ENCODE measurements at regions of chr4 and their contacts with region 1.

Region 1: DNA sequence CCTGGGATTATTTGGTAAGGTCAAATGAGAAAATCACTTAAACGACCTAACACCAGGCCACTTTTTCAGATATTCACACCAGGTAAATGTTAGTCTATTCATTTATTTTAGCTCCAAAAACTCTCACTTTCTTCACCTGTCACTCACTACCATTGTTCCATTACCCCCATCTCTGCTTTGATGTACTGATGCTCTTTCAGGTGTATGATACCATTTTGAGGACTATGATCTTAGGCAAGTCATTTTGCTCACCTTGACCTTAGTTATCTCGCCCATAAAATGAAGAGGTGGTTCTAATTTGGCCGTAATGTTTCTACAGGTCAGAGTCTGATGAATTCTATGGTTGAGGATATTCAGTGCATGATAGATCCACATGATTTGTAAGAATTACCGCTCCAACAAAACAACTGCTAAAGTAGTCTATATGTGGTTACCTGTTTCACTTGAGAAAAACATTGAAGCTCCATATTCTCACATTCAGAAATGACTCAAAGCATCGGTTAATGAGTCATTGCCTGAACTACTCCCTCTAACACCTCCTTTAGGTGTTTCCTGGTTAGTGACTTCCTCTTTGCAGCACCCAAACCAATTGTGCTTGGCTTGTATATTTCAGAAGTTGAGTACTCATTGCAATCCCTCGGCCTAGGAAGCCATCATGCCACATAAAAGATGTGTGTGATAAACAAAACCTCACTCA is 4.5 kb downstream of the DTHD1 start:
- DNase-seq: no peak
- ATAC-seq: peak; percentile 95
- H3K4me3 Mint-ChIP-seq: no peak overlapping the region
- H3K27ac Mint-ChIP-seq: peak overlapping the region; percentile 81
- H3K4me1 Mint-ChIP-seq: peaks cover 21% of the 10 kb centered on the region
- H3K27me3 Mint-ChIP-seq: no peaks in the 10 kb centered on the region
- CTCF ChIP-seq: no peak

Region 2: DNA sequence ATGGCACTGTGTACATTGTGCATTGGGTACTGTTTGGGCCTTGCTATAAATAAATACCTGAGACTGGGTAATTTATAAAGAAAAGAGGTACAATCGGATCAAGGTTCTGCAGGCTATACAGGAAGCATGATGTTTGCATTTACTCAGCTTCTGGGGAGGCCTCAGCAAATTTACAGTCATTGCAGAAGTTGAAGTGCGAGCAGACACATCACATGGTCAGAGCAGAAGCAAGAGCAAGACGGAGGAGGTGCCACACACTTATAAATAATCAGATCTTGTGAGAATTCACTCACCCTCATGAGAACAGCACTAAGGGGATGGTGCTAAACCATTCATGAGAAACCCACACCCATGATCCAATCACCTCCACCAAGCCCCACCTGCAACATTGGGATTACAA is 546.6 kb before region 1 on chr4:
- CTCF ChIA-PET with region 1: no interaction called
- POLR2A ChIA-PET with region 1: no interaction called
- intact Hi-C with region 1: no loop called
- DNase-seq: no peak
- ATAC-seq: no peak
- H3K4me3 Mint-ChIP-seq: no peak overlapping the region
- H3K27ac Mint-ChIP-seq: no peak overlapping the region
- H3K4me1 Mint-ChIP-seq: no peaks in the 10 kb centered on the region
- H3K27me3 Mint-ChIP-seq: no peaks in the 10 kb centered on the region
- CTCF ChIP-seq: no peak

Region 3: GRCh38 chr4:35836596-35836995 is 449.3 kb before region 1 on chr4:
- CTCF ChIA-PET with region 1: no interaction called
- POLR2A ChIA-PET with region 1: no interaction called
- intact Hi-C with region 1: no loop called
- DNase-seq: no peak
- ATAC-seq: no peak
- H3K4me3 Mint-ChIP-seq: no peak overlapping the region
- H3K27ac Mint-ChIP-seq: no peak overlapping the region
- H3K4me1 Mint-ChIP-seq: no peaks in the 10 kb centered on the region
- H3K27me3 Mint-ChIP-seq: no peaks in the 10 kb centered on the region
- CTCF ChIP-seq: no peak

Region 4: GRCh38 chr4:36255577-36255976 is 30.4 kb before region 1 on chr4:
- CTCF ChIA-PET with region 1: no interaction called
- POLR2A ChIA-PET with region 1: no interaction called
- intact Hi-C with region 1: loop called (anchors 1 kb)
- DNase-seq: no peak
- ATAC-seq: peak; percentile 90
- H3K4me3 Mint-ChIP-seq: peak overlapping the region; percentile 81
- H3K27ac Mint-ChIP-seq: peak overlapping the region; percentile 95
- H3K4me1 Mint-ChIP-seq: peaks cover 32% of the 10 kb centered on the region
- H3K27me3 Mint-ChIP-seq: no peaks in the 10 kb centered on the region
- CTCF ChIP-seq: no peak

Region 5: DNA sequence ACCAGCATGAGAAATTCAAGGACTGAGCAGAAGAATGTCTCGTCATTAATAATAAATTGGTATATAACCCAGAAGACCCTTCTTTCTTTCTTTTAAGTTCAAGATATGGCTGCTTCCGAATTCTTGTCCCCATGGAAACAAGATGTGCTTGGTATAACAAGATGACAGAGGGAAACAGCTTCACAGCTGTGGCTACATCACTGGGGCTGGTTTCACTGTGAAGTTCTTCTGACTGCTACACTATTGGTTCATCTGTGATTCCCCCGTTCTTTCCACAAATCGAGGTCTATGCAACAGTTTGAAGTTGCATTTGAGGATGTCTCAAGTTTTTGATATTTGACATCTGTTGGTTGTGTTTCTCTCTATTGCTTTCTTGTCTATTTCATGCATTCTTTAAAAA is 16.8 kb before region 1 on chr4:
- CTCF ChIA-PET with region 1: no interaction called
- POLR2A ChIA-PET with region 1: no interaction called
- intact Hi-C with region 1: loop called (anchors 2 kb)
- DNase-seq: no peak
- ATAC-seq: peak; percentile 42
- H3K4me3 Mint-ChIP-seq: no peak overlapping the region
- H3K27ac Mint-ChIP-seq: no peak overlapping the region
- H3K4me1 Mint-ChIP-seq: peaks cover 5% of the 10 kb centered on the region
- H3K27me3 Mint-ChIP-seq: no peaks in the 10 kb centered on the region
- CTCF ChIP-seq: no peak

Region 6: DNA sequence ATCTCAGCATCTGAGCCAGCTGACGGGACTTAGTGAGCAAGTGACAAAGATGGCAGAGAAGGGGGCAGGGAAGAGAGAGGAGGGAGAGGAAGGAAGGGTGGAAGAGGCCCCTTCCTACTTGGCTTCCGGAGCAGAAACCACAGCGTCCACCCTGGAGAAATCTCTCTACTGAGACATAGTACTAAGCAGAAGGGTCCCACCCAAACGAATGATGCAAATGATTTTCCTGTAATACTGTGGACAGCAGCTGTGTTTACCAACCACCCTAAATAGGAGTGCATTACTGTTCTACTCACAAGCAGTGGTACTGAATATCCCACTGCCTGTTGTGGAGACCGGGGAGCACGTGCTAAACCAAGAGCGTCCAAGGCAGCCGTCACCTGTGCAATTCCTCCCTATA is 24.9 kb after region 1 on chr4:
- CTCF ChIA-PET with region 1: no interaction called
- POLR2A ChIA-PET with region 1: interaction called, 3 read pairs
- intact Hi-C with region 1: loop called (anchors 2 kb)
- DNase-seq: no peak
- ATAC-seq: peak; percentile 65
- H3K4me3 Mint-ChIP-seq: peak overlapping the region; percentile 66
- H3K27ac Mint-ChIP-seq: peak overlapping the region; percentile 63
- H3K4me1 Mint-ChIP-seq: peaks cover 63% of the 10 kb centered on the region
- H3K27me3 Mint-ChIP-seq: no peaks in the 10 kb centered on the region
- CTCF ChIP-seq: no peak

Region 7: GRCh38 chr4:36325499-36325898 is 39.6 kb after region 1 on chr4:
- CTCF ChIA-PET with region 1: no interaction called
- POLR2A ChIA-PET with region 1: interaction called, 8 read pairs
- intact Hi-C with region 1: loop called (anchors 2 kb)
- DNase-seq: no peak
- ATAC-seq: peak; percentile 94
- H3K4me3 Mint-ChIP-seq: peak overlapping the region; percentile 64
- H3K27ac Mint-ChIP-seq: peak overlapping the region; percentile 90
- H3K4me1 Mint-ChIP-seq: peaks cover 75% of the 10 kb centered on the region
- H3K27me3 Mint-ChIP-seq: no peaks in the 10 kb centered on the region
- CTCF ChIP-seq: no peak